ENCODE measurements at regions of chr1 and their contacts with region 1.

Region 1: GRCh38 chr1:8922962-8923361 is 22.7 kb upstream of the CA6 start:
- DNase-seq: no peak
- H3K4me3 ChIP-seq: no peak overlapping the region
- H3K27ac ChIP-seq: no peak overlapping the region
- H3K4me1 ChIP-seq: no peaks in the 10 kb centered on the region
- H3K27me3 ChIP-seq: no peaks in the 10 kb centered on the region
- CTCF ChIP-seq: no peak

Region 2: GRCh38 chr1:8580566-8580965 is 342.4 kb before region 1 on chr1:
- intact Hi-C with region 1: no loop called
- DNase-seq: no peak
- H3K4me3 ChIP-seq: no peak overlapping the region
- H3K27ac ChIP-seq: no peak overlapping the region
- H3K4me1 ChIP-seq: peaks cover 7% of the 10 kb centered on the region
- H3K27me3 ChIP-seq: no peaks in the 10 kb centered on the region
- CTCF ChIP-seq: no peak

Region 3: DNA sequence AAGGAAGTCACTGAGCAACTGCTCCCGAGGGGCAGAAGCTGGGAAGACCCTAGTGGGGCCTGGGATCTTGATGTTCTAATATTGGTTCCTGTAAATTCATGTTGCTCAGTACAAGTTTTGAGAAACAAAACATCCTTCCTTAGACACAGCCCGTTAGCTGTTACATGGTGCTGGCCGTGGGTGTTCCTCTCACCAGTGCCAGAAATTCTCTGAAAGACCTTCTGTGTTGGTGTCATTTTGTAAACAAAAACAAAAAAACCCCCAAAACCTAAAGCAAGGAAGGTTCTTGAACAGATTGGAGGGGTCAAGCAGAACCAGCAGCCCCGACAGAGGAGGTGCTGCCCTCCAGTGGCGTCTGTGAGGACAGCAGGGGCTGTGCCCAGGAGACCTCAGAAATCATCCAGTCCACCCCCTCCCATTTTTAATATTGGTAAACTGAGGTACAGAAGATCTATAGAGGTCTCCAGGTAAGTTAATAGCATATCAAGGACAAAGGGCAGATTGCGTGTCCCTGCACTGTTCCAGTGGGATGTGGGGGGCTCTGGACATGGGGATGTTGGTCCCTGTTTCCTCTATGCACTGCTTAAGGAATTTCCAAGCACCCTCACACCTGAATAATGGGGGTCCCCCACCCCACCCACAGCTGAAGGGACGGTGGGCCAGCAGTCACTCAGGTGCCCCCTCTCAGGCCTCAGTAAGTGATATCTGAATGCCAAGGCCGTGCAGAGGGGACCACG is 65.1 kb after region 1 on chr1:
- intact Hi-C with region 1: loop called (anchors 5 kb)
- DNase-seq: peak; percentile 54
- H3K4me3 ChIP-seq: no peak overlapping the region
- H3K27ac ChIP-seq: peak overlapping the region; percentile 43
- H3K4me1 ChIP-seq: peaks cover 30% of the 10 kb centered on the region
- H3K27me3 ChIP-seq: no peaks in the 10 kb centered on the region
- CTCF ChIP-seq: peak; percentile 96

Region 4: GRCh38 chr1:9009438-9010370 is 86.7 kb after region 1 on chr1:
- intact Hi-C with region 1: no loop called
- DNase-seq: no peak
- H3K4me3 ChIP-seq: no peak overlapping the region
- H3K27ac ChIP-seq: peak overlapping the region; percentile 56
- H3K4me1 ChIP-seq: peaks cover 23% of the 10 kb centered on the region
- H3K27me3 ChIP-seq: no peaks in the 10 kb centered on the region
- CTCF ChIP-seq: peak; percentile 60

Region 5: GRCh38 chr1:9455487-9456234 is 532.7 kb after region 1 on chr1:
- intact Hi-C with region 1: no loop called
- DNase-seq: peak; percentile 65
- H3K4me3 ChIP-seq: no peak overlapping the region
- H3K27ac ChIP-seq: no peak overlapping the region
- H3K4me1 ChIP-seq: peaks cover 4% of the 10 kb centered on the region
- H3K27me3 ChIP-seq: no peaks in the 10 kb centered on the region
- CTCF ChIP-seq: peak; percentile 86